ENCODE measurements at regions of chr9 and their contacts with region 1.

Region 1: GRCh38 chr9:72280913-72281500 is 84.0 kb downstream of the ZFAND5 start:
- DNase-seq: peak; percentile 68 to 86 (median 80)
- H3K4me3 ChIP-seq: no peak overlapping the region
- H3K27ac ChIP-seq: no peak overlapping the region
- H3K4me1 ChIP-seq: no peaks in the 10 kb centered on the region
- H3K27me3 ChIP-seq: peaks cover 0 to 3% (median 0%) of the 10 kb centered on the region in 5 experiments

Region 2: GRCh38 chr9:72038890-72039410 is 242.1 kb before region 1 on chr9:
- CTCF ChIA-PET with region 1: interaction called, 114 read pairs
- POLR2A ChIA-PET with region 1: no interaction called
- DNase-seq: peak; percentile 57 to 76 (median 62)
- H3K4me3 ChIP-seq: no peak overlapping the region
- H3K27ac ChIP-seq: no peak overlapping the region
- H3K4me1 ChIP-seq: peaks cover 0 to 8% (median 3%) of the 10 kb centered on the region in 4 experiments
- H3K27me3 ChIP-seq: no peaks in the 10 kb centered on the region

Region 3: DNA sequence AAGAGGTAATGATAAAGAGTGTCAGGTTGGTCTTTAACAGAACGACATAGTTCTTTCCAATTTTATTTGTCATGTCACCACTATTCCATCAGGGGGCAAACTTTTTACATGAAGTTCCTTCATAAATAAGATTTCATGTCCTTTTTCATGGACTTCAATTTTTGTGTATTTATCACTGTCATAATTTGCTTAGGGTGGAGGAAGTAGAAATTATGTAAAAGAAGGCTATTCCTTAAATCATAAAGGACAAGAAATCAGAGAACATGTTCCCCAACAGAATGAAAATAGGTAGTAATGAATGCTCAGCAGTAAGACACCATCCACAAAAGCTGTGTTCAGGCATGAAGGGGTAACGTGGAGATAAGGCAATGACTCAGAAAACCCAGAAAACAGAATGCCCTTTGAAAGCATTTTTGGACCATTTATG is 11.3 kb after region 1 on chr9:
- CTCF ChIA-PET with region 1: interaction called, 20 read pairs
- POLR2A ChIA-PET with region 1: no interaction called
- DNase-seq: peak; percentile 30 to 56 (median 44)
- H3K4me3 ChIP-seq: no peak overlapping the region
- H3K27ac ChIP-seq: no peak overlapping the region
- H3K4me1 ChIP-seq: peaks cover 0 to 12% (median 6%) of the 10 kb centered on the region in 4 experiments
- H3K27me3 ChIP-seq: no peaks in the 10 kb centered on the region

Region 4: GRCh38 chr9:72592502-72593403 is 311.7 kb after region 1 on chr9:
- CTCF ChIA-PET with region 1: interaction called, 118 read pairs
- POLR2A ChIA-PET with region 1: no interaction called
- DNase-seq: peak; percentile 64 to 80 (median 75)
- H3K4me3 ChIP-seq: no peak overlapping the region
- H3K27ac ChIP-seq: no peak overlapping the region
- H3K4me1 ChIP-seq: peaks cover 0 to 1% (median 0%) of the 10 kb centered on the region in 4 experiments
- H3K27me3 ChIP-seq: peaks cover 0 to 1% (median 0%) of the 10 kb centered on the region in 5 experiments

Region 5: DNA sequence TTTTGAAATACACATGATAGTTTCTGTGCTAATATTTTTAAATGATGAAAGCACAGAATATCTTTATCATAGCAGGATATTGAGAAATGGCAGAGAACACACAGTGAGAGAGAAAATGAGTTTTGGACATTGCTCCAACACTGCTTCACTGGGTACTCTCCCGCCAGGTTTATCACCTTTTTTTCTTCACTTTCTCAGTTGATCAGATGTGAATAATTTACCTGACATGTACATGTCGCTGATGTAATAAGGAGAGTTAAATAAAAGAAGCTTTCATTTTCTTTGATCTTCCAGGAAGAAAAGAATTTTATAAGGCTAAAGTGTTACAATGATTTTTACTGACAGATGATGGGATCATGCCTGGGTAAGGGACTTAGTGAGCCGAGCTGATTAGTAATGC is 537.4 kb after region 1 on chr9:
- CTCF ChIA-PET with region 1: interaction called, 71 read pairs
- POLR2A ChIA-PET with region 1: no interaction called
- DNase-seq: no peak
- H3K4me3 ChIP-seq: no peak overlapping the region
- H3K27ac ChIP-seq: no peak overlapping the region
- H3K4me1 ChIP-seq: peaks cover 0 to 2% (median under 1%) of the 10 kb centered on the region in 4 experiments
- H3K27me3 ChIP-seq: no peaks in the 10 kb centered on the region

Region 6: DNA sequence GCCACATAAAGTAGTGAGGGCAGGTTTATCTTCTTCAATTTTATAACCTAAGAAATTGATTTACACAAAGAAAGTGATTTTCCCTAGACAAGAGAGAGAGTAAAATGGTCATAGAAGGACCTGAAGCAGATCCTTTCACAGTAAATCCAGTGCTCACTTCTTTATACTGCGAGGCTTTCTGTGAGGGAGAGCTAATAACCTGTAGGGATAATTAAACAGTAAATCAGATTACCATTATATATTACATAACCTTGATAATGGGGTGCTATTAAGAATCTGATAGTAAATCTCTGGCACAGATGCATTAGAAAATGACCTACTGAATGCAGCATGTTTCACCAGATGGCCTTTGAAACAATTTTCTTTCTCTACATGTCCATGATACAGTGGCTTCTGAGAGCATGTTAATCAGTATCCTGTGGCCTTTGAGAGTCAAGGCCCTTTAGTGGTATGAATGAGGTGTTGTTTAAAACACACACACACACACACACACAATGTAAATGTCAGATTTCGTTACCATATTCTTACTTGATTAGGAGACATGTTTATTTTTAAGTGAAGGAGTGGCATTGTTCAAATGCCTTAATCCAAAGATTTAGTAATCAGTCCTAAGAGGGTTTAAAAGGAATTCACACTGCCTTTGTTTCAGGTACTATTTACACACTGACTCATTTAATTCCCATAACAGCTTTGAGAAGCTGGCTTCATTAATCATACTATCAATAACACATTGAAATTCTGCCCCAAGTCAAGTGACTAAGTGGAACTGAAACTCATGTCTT is 547.1 kb after region 1 on chr9:
- CTCF ChIA-PET with region 1: interaction called, 71 read pairs
- POLR2A ChIA-PET with region 1: no interaction called
- DNase-seq: no peak
- H3K4me3 ChIP-seq: no peak overlapping the region
- H3K27ac ChIP-seq: no peak overlapping the region
- H3K4me1 ChIP-seq: no peaks in the 10 kb centered on the region
- H3K27me3 ChIP-seq: no peaks in the 10 kb centered on the region